HEK293T (cell line): ENCODE measurements at regions of chr1 and their contacts with region 1.

Region 1: DNA sequence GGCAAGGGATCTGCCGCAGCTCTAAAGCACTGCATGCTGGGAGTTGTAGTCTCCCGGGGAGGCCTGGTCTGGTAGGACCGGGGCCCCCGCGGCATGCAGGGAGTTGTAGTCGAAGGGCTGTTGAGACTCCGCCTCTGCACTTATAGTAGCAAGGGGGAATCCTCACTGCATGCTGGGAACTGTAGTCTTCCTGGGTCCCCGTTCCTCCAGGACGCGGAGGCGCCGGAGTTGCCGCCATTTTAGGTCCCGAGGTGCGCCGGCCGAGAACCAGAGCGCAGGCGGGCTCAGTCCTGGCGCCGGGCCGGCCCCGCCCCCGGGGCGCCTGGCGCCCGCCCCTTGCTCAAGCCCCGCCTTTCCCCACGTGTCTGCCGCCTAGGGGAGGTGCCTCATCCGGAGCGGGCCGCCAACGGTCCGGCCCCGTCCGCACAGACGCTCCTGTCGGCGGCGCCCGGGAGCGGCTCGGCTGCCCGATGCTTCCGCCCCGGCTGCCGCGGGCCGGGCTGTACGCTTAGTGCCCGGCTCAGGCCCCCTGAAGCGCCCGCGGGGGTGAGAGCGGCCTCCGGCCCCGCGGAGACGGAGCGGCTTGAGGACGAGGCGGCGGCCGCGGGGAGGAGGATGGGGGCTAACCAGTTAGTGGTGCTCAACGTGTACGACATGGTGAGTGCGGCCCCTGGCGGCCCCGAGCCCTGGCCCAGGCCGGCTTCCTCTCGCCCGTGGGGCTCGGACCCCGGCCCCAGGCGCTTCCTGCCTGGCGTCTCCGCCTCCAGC is at the start of gene DESI2:
- DNase-seq: peak; percentile 99

Region 2: GRCh38 chr1:244603498-244603897 is 49.4 kb before region 1 on chr1:
- CTCF ChIA-PET with region 1: interaction called, 3 read pairs
- POLR2A ChIA-PET with region 1: interaction called, 14 read pairs
- DNase-seq: peak; percentile 38